Posterior vena cava (tissue), 2 donors: ENCODE measurements at regions of chr11 and their contacts with region 1.

Region 1: DNA sequence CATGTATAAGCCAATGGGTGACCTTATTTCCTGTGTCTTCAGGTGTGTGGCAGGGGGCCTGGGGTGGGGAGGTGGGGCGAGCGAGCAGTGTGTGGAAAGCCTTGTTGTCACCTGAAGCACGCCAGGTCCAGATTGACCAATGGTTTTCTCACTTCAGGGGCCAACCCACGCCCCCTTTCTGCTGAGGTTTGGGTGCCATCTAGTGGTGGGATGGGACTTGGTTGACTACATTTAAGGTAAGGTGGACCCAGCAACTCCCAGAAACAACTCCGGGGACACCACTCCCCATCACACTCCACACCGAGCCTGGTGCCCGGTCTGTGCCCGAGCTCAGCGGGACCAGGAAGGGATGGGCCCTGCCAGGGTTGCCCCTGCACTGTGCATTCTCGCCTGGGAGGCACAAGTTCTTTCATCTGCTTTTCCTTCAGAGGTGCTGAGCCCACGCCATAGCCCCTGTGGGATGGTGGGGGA is 40.0 kb downstream of the TPCN2 start:
- DNase-seq: peak; percentile 84

Region 2: DNA sequence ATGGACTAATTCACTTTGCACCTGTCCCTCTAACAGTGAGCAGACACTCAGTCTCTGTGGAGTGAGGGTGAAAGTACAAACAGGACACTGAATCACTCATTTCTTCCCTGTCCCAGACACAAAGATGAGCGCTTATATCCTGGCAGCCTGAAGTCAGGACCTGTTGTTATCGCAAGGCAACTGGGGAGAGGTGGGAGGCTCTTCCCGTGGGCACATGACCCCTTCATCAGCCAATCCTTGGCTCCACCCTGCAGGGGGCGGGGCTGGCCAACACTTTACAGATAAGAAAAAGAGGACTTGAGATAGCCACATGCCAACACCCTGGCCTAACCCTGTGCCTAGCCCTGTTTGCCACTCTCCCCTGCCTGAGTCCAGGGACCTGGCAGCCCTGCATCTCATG is 307.9 kb before region 1 on chr11:
- intact Hi-C with region 1: loop called in 1 of 2 experiments (anchors 10 kb)
- DNase-seq: no peak

Region 3: GRCh38 chr11:68806921-68807844 is 281.5 kb before region 1 on chr11:
- intact Hi-C with region 1: loop called in 1 of 2 experiments (anchors 5 kb)
- DNase-seq: no peak

Region 4: GRCh38 chr11:68903288-68904247 is 185.1 kb before region 1 on chr11 and contains the starts of genes IGHMBP2 and MRPL21:
- intact Hi-C with region 1: loop called in 1 of 2 experiments (anchors 10 kb)
- DNase-seq: peak; percentile 97
- total RNA-seq, gene IGHMBP2: 18.3 to 18.4 TPM
- total RNA-seq, gene MRPL21: 44.9 to 47.5 TPM

Region 5: GRCh38 chr11:68942751-68943271 is 145.9 kb before region 1 on chr11:
- intact Hi-C with region 1: loop called in 1 of 2 experiments (anchors 10 kb)
- DNase-seq: no peak

Region 6: DNA sequence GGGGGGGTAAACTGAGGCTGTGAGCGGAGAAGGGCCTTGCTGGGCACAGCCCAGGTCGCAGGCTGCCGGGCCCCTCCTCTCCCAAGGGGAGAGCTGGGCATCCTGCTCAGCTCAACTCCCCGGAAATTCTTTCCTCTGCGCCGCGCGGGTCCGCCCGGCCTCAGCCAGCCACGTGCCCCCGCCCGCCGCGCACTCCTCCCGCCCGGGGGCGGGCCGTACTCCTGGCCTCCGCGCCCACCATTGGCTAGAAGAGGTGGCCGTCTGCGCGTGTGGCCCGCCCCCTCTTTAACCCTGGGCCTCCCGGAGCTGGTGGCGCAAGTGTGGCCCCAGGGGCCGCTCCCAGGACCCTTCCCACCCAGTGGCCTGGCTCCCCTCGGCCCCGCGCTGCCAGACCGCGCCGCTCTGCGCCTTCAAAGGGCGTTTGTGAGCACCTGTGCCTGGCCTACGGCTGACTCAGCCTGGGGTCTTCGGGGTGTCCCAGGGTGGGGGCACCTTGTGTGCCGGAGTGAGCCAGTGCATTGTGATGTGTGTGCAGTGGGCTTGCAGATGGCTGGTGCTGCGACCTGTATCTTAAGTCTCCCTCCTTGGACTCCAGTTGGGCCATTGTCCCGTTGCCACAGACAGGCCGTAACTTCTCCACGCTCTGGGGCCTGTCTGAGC is 77.6 kb before region 1 on chr11:
- intact Hi-C with region 1: loop called (anchors 5 to 10 kb)
- DNase-seq: peak; percentile 93